BJ (cell line): ENCODE measurements at regions of chr5 and their contacts with region 1.

Region 1: DNA sequence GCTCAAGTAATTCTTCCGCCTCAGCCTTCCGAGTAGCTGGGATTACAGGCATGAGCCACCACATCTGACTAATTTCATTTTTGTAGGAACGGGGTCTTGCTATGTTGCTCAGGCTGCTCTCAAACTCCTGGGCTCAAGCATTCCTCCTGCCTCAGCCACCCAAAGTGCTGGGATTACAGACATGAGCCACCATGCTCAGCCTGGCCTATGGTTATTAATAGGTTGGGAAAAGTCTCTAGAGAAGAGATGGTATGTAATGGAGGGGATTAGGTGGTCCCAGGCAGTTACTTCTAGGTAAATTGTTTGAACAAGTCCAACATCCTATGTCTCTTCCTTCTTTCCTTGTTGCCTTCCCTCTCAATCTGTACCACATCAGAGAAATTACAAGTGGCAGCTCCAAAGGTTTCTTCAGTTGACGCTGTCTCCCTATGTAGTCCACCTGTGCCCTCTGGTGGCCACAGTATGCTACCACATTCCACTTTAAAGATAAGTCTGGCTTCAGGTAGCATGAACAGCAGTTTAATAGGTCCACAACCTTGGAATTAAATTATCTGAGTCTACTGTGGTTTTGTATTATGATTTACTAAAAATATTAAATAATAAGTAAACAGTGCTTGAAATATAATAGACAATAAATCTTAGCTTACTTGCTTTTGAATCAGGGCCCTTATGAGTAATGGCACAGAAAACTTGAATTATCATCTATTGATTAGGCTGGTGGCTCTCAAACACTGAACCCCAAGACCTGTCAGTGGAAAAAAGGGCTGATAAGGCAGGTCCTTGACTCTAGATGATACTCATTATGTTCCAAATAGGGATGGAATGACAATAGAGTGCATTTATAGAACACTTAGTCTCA is 9.7 kb downstream of the TIGD6 start:
- DNase-seq: no peak
- H3K4me3 ChIP-seq: no peak overlapping the region
- H3K27me3 ChIP-seq: no peaks in the 10 kb centered on the region
- CTCF ChIP-seq: peak; percentile 92

Region 2: GRCh38 chr5:149847611-149848010 is 143.1 kb before region 1 on chr5:
- CTCF ChIA-PET with region 1: interaction called, 286 read pairs
- POLR2A ChIA-PET with region 1: no interaction called
- DNase-seq: no peak
- H3K4me3 ChIP-seq: no peak overlapping the region
- H3K27me3 ChIP-seq: no peaks in the 10 kb centered on the region
- CTCF ChIP-seq: no peak

Region 3: GRCh38 chr5:149938791-149939358 is 51.9 kb before region 1 on chr5:
- CTCF ChIA-PET with region 1: no interaction called
- POLR2A ChIA-PET with region 1: no interaction called
- DNase-seq: peak; percentile 72
- H3K4me3 ChIP-seq: no peak overlapping the region
- H3K27me3 ChIP-seq: no peaks in the 10 kb centered on the region
- CTCF ChIP-seq: no peak

Region 4: DNA sequence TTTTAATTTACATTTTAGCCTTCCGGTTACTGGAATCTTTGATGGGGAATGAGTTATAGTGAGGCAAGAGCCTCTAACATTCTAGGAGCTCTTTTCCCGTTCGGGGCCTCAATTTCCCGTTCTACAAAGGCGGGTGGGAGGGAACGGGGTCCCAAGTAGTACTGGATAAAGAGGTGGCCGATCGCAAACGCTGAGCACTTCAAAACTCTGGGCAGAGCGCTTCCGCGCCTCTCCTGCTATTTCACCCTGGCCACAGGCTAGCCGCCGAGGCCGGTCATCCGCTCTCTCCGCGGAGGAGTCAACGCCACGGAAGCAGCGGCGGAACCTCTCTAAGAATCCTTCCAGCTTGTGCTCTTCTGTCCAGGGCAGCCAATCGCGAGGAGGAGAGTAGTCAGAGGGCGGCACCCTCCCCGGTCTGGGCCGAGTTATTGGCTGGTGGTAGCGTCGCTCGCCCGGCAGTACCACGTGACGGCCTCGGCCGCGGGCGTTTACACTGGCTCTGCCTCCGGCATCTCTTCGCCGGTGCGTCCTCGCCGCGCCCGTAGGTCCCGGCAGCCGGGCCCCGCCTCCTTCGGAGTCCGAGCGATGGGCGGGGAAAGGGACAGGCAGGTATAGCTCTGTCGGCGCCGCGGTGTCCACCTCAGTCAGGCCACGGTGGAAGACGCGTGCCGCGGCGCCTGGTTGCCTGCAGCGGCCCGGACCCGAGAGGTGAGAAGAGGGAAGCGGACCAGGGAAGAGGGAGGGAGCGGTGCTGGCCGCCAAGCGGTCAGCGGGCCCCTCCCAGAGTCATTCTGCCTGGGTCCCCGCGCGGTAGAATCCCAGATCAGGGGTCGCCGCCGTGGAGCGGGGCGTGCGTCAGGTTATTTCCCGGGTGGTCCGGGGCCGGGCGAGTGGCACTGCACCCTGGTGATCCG is 30.2 kb before region 1 on chr5 and contains the start of gene SLC26A2:
- CTCF ChIA-PET with region 1: interaction called, 12 read pairs
- POLR2A ChIA-PET with region 1: no interaction called
- DNase-seq: peak; percentile 86
- H3K4me3 ChIP-seq: peak within 1 kb of the TSS; percentile 78
- H3K27me3 ChIP-seq: no peaks in the 10 kb centered on the region
- CTCF ChIP-seq: 0 out of 2 replicates have a peak, but pooled peaks have one; percentile 10
- polyA plus RNA-seq, gene SLC26A2: 3.3 and 7.6 TPM in 2 replicates

Region 5: DNA sequence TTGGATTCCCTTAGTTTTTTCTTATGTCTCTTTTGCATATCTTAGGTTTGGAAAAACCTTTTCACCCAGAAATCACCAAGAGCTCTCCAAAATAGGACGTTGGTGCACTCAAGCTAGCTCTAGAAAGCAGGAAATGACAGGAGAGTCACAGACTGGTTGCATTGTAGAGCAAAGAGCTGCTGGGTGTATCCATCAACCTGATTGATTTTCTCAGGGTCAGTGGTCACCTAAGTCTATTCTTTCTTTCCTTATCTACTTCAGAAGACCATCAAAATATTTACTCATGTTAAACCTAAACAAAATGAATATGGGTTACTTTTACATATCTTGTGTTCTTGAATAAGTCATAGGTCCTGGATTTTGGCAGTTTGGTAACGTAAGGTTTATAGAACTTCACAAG is 15.3 kb before region 1 on chr5:
- CTCF ChIA-PET with region 1: interaction called, 19 read pairs
- POLR2A ChIA-PET with region 1: no interaction called
- DNase-seq: no peak
- H3K4me3 ChIP-seq: no peak overlapping the region
- H3K27me3 ChIP-seq: no peaks in the 10 kb centered on the region
- CTCF ChIP-seq: no peak